Astrocyte of the cerebellum (primary cell): ENCODE measurements at regions of chr18 and their contacts with region 1.

Region 1: DNA sequence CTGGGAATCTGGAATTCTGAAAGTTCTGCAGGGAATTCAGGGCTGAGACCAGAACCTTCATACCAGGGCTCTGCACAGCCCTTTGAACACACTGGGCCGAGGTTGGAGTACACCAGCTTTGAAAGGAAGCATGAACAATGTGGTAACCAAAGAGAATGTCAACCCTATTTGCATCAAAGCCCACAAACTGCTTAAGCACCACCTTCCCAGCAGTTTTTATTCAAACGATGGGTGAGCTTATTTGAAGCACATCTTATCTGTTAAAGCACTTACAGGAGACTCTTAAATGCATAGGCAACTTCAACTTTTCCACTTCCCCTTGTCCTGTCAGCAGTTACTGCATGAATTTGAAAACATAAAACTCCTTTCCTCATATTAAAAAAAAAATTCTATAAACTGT is 96.6 kb downstream of the TXNL1 start:
- DNase-seq: no peak
- H3K4me3 ChIP-seq: no peak overlapping the region
- CTCF ChIP-seq: no peak

Region 2: DNA sequence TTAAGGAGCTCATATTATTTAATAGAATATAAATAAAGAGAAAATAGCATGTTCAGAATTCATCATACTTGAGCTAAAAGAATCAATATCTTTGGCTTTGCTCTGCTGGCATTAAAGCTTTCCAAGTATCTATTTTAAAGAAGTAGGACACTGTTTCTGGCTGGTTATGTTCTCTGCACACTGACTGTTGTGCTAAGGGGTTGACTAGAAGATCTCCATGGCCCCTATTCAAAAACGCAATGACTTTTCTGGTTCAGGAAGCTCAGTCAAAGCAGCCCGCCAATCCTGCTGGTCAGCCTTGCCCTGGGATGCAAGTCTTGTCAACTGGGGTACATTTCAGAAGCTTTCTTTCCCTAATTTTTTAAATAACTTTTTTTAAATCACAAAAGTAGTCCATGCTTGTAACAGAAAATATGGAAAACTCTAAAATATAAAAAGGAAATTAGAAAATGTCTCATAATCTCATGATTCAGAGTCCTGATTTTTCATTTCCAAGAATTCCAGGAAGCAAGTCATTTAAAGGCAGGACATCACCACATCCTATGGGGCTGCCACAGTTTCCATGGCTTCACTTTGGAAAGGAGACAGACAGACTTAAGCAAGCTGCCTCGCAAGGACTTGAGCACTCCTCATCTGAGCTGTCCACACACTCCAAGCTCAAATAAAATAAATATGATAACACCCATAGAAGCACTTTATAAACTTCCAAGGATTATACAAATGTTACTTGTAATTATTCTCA is 98.5 kb before region 1 on chr18:
- in situ Hi-C with region 1: loop called (anchors 5 kb)
- DNase-seq: no peak
- H3K4me3 ChIP-seq: no peak overlapping the region
- CTCF ChIP-seq: no peak

Region 3: DNA sequence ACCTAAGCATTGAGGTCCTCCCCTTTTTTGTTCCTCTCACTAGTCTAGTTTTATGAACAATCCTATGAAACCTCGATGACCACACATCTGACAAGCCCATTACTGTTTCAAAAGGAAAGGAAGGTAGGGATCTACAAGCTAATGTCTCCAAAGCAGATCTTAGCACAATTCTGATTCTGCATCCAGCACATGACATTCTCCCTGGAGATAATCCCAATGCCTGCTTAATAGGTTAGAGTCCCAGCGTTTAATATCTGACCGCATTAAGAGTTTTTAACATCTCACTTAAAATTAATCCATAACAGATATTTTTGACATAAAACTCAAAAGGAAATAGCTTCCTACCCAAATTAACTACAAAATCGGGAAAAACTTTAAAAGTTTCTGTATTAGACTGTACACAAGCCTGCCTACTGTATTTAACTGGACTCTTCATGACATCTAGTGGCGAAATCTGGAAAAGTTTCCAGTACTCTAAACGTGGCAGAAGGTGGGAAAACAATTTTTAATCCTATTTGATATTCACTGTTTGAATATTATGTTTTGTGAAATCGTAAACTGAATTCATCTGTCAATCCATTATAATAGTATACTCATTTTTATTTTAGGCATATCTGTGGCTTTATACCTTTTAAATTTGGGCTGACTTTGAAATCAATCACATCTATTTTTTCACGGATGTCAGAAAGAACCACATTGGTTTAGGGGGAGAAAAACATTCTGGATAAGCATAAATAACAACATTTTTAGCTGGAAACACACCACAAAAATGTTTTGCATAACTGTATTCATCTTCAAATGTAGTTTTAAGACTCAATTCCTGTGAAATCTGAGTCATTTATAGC is 34.2 kb after region 1 on chr18:
- in situ Hi-C with region 1: no loop called
- DNase-seq: peak; percentile 60
- H3K4me3 ChIP-seq: no peak overlapping the region
- CTCF ChIP-seq: peak; percentile 52

Region 4: GRCh38 chr18:56823986-56824565 is 282.3 kb after region 1 on chr18:
- in situ Hi-C with region 1: no loop called
- DNase-seq: no peak
- H3K4me3 ChIP-seq: no peak overlapping the region
- CTCF ChIP-seq: no peak